CD4-positive, alpha-beta memory T cell (primary cell): ENCODE measurements at regions of chr6 and their contacts with region 1.

Region 1: DNA sequence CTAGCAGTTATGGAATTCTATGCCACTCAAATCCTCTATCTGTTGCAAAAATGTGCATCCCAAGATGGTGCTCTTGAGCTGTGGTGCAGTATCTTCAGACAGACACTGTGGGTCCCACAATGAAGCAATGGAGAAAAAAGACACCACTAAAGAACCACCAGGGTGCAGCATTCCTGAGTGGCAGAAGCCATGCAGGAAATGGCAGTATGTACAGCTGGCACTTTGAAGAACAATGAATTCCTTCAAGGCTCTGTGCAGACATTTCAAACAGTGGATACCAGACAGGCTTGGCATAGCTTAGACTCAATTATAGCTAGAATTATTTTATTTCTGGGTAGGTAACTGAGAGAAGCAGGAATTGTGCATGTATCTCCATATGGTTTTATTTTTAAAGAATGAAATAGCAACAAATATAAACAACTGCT is 24.0 kb upstream of the HDAC2 start:
- DNase-seq: peak; percentile 21 to 57 (median 54)
- H3K4me3 ChIP-seq: no peak overlapping the region
- H3K4me3 Mint-ChIP-seq: no peak overlapping the region
- H3K27ac ChIP-seq: no peak overlapping the region
- H3K27ac Mint-ChIP-seq: peak overlapping the region in 1 of 7 donors; percentile 42
- H3K4me1 ChIP-seq: no peaks in the 10 kb centered on the region
- H3K4me1 Mint-ChIP-seq: peaks cover 0 to 4% (median under 1%) of the 10 kb centered on the region in 4 donors
- H3K27me3 ChIP-seq: no peaks in the 10 kb centered on the region
- H3K27me3 Mint-ChIP-seq: peaks cover 10 to 13% of the 10 kb centered on the region in 2 donors

Region 2: DNA sequence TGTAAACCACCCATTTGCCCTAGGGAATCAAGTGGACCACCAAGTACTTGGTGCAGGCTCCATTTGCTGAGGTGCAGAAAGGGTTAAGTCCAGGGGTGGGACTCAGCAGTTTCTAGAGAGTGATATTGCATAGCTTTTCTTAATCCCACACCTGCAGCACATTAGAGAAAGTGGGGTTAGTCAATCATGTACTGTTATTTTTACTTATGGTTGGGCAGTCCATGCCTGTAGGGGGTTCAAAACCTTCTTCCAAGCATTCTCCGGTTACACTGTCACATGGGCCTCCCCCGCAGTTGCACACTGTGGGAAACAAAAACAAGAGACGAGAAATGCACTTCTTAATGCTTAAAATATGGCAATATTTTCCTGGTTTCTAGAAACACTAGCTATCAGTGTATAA is 1806.0 kb before region 1 on chr6:
- CTCF ChIA-PET with region 1: no interaction called
- POLR2A ChIA-PET with region 1: no interaction called
- intact Hi-C with region 1: no loop called
- DNase-seq: no peak
- H3K4me3 ChIP-seq: no peak overlapping the region
- H3K4me3 Mint-ChIP-seq: no peak overlapping the region
- H3K27ac ChIP-seq: no peak overlapping the region
- H3K27ac Mint-ChIP-seq: no peak overlapping the region
- H3K4me1 ChIP-seq: no peaks in the 10 kb centered on the region
- H3K4me1 Mint-ChIP-seq: peaks cover 0 to 5% (median 2%) of the 10 kb centered on the region in 4 donors
- H3K27me3 ChIP-seq: no peaks in the 10 kb centered on the region
- H3K27me3 Mint-ChIP-seq: peaks cover 9 to 13% of the 10 kb centered on the region in 2 donors

Region 3: GRCh38 chr6:113980937-113981554 is 13.9 kb before region 1 on chr6:
- CTCF ChIA-PET with region 1: interaction called, 11 read pairs
- POLR2A ChIA-PET with region 1: no interaction called
- intact Hi-C with region 1: no loop called
- DNase-seq: no peak
- H3K4me3 ChIP-seq: no peak overlapping the region
- H3K4me3 Mint-ChIP-seq: no peak overlapping the region
- H3K27ac ChIP-seq: no peak overlapping the region
- H3K27ac Mint-ChIP-seq: no peak overlapping the region
- H3K4me1 ChIP-seq: no peaks in the 10 kb centered on the region
- H3K4me1 Mint-ChIP-seq: no peaks in the 10 kb centered on the region
- H3K27me3 ChIP-seq: no peaks in the 10 kb centered on the region
- H3K27me3 Mint-ChIP-seq: peaks cover under 1% of the 10 kb centered on the region in 2 donors

Region 4: DNA sequence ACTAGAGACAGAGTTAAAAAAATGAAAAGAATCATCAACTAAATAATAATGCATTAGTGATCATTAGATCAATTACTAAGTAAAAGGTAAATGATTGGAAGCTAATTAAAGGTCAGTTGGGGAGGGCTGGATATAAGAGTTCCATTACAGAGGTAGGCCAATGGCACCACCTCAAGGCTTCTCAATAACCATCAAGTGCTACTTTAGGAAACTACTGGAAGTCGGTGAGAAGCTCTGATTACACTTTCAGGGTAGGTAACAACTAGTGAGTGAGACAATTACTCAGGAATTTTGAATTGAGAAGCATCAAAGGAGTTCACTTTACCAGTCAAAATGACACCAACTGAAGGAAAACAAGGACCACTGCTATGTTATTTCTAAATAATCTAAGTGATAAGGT is 66.2 kb after region 1 on chr6:
- CTCF ChIA-PET with region 1: interaction called, 5 read pairs
- POLR2A ChIA-PET with region 1: no interaction called
- intact Hi-C with region 1: loop called (anchors 1 kb)
- DNase-seq: no peak
- H3K4me3 ChIP-seq: no peak overlapping the region
- H3K4me3 Mint-ChIP-seq: no peak overlapping the region
- H3K27ac ChIP-seq: no peak overlapping the region
- H3K27ac Mint-ChIP-seq: no peak overlapping the region
- H3K4me1 ChIP-seq: no peaks in the 10 kb centered on the region
- H3K4me1 Mint-ChIP-seq: no peaks in the 10 kb centered on the region
- H3K27me3 ChIP-seq: no peaks in the 10 kb centered on the region
- H3K27me3 Mint-ChIP-seq: peaks cover 9 to 14% of the 10 kb centered on the region in 2 donors

Region 5: GRCh38 chr6:114108119-114109002 is 113.4 kb after region 1 on chr6:
- CTCF ChIA-PET with region 1: interaction called, 43 read pairs
- POLR2A ChIA-PET with region 1: interaction called, 8 read pairs
- intact Hi-C with region 1: no loop called
- DNase-seq: no peak
- H3K4me3 ChIP-seq: no peak overlapping the region
- H3K4me3 Mint-ChIP-seq: no peak overlapping the region
- H3K27ac ChIP-seq: no peak overlapping the region
- H3K27ac Mint-ChIP-seq: no peak overlapping the region
- H3K4me1 ChIP-seq: no peaks in the 10 kb centered on the region
- H3K4me1 Mint-ChIP-seq: peaks cover 0 to 1% (median 0%) of the 10 kb centered on the region in 4 donors
- H3K27me3 ChIP-seq: no peaks in the 10 kb centered on the region
- H3K27me3 Mint-ChIP-seq: peaks cover 6 to 12% of the 10 kb centered on the region in 2 donors

Region 6: DNA sequence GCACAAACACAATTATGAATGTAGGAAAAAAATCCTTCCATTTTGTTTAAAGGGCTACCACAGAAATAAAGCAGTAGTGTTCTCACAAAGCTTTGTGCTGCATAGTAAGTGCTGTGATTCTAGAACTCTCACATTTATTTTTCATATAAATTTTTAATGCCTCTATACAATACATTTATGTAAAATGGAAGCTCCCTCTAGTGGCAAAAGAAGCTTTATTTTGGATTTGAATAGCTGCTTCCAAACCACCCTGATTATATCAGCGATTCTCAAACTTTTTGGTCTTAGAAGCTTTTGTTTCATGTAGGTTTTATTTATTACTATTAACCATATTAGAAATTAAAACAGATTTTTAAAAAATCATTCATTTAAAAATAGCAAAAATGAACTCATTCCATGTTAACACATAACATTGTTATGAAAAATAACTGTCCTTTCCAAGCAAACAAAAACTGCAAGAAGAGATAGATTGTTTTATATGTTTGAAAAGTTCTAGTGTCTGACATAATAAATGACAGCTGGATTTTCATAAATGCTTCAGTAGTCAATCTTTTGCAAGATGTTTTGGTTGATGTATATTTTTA is 309.5 kb after region 1 on chr6:
- CTCF ChIA-PET with region 1: interaction called, 17 read pairs
- POLR2A ChIA-PET with region 1: no interaction called
- intact Hi-C with region 1: no loop called
- DNase-seq: peak in 1 of 5 donors; percentile 3
- H3K4me3 ChIP-seq: no peak overlapping the region
- H3K4me3 Mint-ChIP-seq: no peak overlapping the region
- H3K27ac ChIP-seq: no peak overlapping the region
- H3K27ac Mint-ChIP-seq: no peak overlapping the region
- H3K4me1 ChIP-seq: no peaks in the 10 kb centered on the region
- H3K4me1 Mint-ChIP-seq: no peaks in the 10 kb centered on the region
- H3K27me3 ChIP-seq: no peaks in the 10 kb centered on the region
- H3K27me3 Mint-ChIP-seq: peaks cover 0 to 2% of the 10 kb centered on the region in 2 donors